Dendritic cell treated with granulocyte-macrophage colony-stimulating factor and Interleukin-4, amounts not matched to agents 40 ng/mL and 50 ng/mL, for 4 days (primary cell): ENCODE measurements at regions of chr3 and their contacts with region 1.

Region 1: GRCh38 chr3:156151824-156152428 is 31.5 kb downstream of the KCNAB1 start:
- H3K4me3 Mint-ChIP-seq: no peak overlapping the region
- H3K27ac Mint-ChIP-seq: no peak overlapping the region
- H3K4me1 Mint-ChIP-seq: peaks cover 7% of the 10 kb centered on the region
- H3K27me3 Mint-ChIP-seq: peaks cover 4% of the 10 kb centered on the region

Region 2: GRCh38 chr3:156382458-156383346 is 230.8 kb after region 1 on chr3:
- intact Hi-C with region 1: loop called (anchors 1 kb)
- H3K4me3 Mint-ChIP-seq: no peak overlapping the region
- H3K27ac Mint-ChIP-seq: no peak overlapping the region
- H3K4me1 Mint-ChIP-seq: no peaks in the 10 kb centered on the region
- H3K27me3 Mint-ChIP-seq: peaks cover 6% of the 10 kb centered on the region

Region 3: DNA sequence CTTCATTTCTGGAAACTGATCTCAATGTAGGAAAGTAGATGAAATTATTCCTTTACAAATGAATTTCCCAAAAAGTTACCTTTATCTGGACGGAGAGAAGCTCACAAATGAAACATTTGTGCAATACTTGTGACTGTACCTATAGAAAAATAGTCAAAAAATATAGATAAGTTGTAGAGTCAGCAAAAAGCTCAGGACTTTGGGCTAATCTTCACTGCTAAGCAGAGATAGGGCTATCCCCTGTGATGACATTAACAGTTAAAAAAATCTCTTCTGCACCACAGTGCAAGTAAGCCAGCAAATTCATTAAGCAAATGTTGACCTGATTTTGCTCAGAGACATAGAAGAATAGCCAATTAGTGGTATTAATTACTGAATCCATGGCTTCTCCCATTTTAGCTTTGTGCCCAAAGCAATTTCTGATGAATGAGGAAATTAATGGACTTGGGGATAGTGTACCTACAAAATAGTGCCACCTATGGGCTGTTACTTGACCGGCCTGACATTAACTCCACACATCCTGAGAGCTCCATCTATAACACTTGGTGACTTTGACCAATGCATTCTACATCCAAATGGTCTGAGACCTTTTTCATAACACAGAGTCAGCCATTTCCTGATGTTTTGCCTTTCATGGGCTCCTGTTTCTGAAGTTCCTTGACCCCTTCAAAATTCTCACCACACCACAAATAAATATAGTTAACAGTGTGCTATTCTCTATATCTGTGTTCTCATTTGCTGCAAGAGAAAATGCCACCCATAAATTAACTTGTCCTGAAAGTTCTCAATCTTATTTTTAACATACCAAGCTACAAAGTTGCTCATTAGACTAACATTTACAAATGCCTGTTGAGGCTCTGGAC is 298.0 kb after region 1 on chr3:
- intact Hi-C with region 1: loop called (anchors 5 kb)
- H3K4me3 Mint-ChIP-seq: no peak overlapping the region
- H3K27ac Mint-ChIP-seq: no peak overlapping the region
- H3K4me1 Mint-ChIP-seq: peaks cover 18% of the 10 kb centered on the region
- H3K27me3 Mint-ChIP-seq: no peaks in the 10 kb centered on the region

Region 4: GRCh38 chr3:156509189-156510174 is 357.6 kb after region 1 on chr3:
- intact Hi-C with region 1: loop called (anchors 1 kb)
- H3K4me3 Mint-ChIP-seq: no peak overlapping the region
- H3K27ac Mint-ChIP-seq: no peak overlapping the region
- H3K4me1 Mint-ChIP-seq: no peaks in the 10 kb centered on the region
- H3K27me3 Mint-ChIP-seq: peaks cover 15% of the 10 kb centered on the region

Region 5: DNA sequence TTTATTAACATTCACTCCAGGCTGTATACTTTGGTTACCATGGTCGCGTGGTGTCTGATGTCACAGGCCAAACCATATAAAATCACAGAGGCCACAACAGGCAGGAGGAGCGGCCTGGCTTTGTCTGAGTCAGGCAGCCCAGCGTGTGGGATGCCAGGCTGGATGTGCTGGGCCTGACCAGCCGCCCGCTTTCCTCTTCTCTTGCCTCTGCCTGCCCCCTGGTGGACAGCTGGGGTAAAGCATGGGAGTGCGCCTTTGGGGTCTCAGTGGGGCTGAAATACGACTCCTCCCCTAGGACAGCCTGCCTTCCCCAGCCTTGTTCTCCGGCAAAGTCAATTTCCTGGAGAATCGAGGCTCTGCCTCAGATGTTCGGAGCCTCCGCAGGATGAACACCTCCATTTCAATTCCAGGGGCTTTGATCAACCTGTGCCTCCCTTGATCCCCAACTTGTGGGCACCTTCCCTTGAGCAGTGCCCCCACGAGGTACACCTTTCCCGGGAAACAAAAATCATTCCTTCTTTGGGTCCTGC is 929.8 kb after region 1 on chr3:
- intact Hi-C with region 1: loop called (anchors 2 kb)
- H3K4me3 Mint-ChIP-seq: no peak overlapping the region
- H3K27ac Mint-ChIP-seq: no peak overlapping the region
- H3K4me1 Mint-ChIP-seq: no peaks in the 10 kb centered on the region
- H3K27me3 Mint-ChIP-seq: peaks cover 8% of the 10 kb centered on the region

Region 6: DNA sequence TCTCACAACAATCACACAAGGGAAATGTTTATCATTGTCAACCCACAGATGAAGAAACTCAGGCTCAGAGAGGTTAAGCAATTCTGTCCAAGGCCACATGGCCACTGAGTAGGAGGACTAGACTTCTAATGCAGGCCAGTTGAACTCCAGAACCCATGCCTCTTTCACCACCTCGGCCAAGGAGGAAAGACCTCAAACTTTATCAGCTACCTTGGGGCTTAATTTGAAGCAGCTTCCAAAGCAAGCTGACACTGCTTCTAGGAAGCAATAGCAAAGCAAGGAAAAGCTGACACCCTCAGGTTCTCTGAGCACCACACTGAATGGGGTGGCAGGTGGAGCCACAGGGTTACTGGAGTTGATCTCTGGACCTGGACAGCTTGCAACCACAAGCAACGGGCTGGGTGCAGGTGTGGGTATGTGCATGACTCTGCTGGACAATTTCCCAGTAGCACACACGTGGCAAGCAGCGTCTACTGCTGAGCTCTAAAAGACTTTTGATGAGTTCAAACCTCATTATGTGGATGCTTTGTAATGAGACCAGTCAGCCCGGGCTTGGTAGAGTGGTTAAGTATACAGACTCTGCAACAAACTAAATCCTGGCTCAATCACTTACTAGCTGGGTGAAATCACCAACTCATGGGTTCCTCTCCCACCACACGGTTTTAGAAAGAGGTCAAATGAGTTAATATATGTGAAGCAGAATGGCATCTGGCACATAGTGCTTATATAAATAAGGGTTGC is 984.9 kb after region 1 on chr3:
- intact Hi-C with region 1: loop called (anchors 5 kb)
- H3K4me3 Mint-ChIP-seq: no peak overlapping the region
- H3K27ac Mint-ChIP-seq: no peak overlapping the region
- H3K4me1 Mint-ChIP-seq: no peaks in the 10 kb centered on the region
- H3K27me3 Mint-ChIP-seq: no peaks in the 10 kb centered on the region